Dorsolateral prefrontal cortex (tissue), 120 donors: ENCODE measurements at regions of chr22 and their contacts with region 1.

Region 1: DNA sequence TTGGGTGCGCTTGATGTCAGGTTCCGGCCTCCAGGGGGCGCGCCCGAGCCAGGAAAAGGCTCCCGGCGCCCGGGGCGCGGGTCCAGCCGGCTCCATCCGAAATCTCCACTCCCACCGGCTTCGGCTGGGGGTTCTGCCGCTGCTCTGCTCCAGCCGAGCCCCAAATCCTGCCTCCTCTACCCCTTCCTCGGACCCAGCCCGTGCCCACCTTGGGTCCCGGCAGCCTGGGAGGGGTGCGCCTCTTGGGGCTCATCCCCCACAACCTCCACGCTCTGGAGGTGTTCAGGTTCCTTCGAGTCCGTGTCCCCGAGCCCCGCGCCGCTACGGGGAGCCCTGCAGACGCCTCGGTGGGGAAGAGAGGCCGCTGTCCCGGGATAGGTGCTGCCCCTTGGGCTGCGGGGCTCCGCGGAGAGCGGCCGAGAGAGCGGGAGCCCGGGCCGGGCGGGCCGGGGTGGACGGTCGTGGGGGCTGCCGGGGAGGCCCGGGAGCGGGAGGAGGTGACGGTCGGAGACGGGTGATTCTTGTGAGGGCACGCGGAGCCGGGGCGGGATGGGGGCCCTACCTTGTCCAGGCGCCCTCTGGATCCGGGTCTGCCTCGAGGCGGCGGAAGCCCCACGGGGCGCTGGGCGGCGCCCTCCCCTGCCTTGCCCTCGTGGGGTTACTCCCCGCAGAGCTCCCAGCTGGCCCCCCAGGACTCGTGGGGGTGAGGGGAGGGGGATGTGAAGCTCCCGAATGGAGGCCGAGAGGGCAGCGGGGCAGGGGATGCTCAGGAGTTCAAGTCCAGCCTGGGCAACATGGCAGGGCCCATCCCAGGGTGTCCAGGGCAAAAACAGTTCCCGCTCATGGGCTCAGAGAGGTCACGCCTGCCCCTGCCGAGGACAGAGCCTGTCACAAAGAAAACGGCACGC is 13.2 kb upstream of the CYB5R3 start:
- DNase-seq: peak; percentile 64 to 84 (median 76)
- H3K4me3 ChIP-seq: peak overlapping the region; percentile 34 to 83 (median 66)
- H3K27ac ChIP-seq: peak overlapping the region in 36 of 59 donors; percentile 1 to 86 (median 63)
- H3K27me3 ChIP-seq: no peaks in the 10 kb centered on the region
- CTCF ChIP-seq: peak in 54 of 56 donors; percentile 72 to 90 (median 82)

Region 2: GRCh38 chr22:42614312-42615091 is 47.9 kb before region 1 on chr22 and contains the start of gene POLDIP3:
- intact Hi-C with region 1: no loop called
- DNase-seq: peak; percentile 99 to 100 (median 99)
- H3K4me3 ChIP-seq: peak within 1 kb of the TSS; percentile 74 to 100 (median 91)
- H3K27ac ChIP-seq: peak within 1 kb of the TSS; percentile 88 to 100 (median 98)
- H3K27me3 ChIP-seq: no peaks in the 10 kb centered on the region
- CTCF ChIP-seq: peak in 55 of 56 donors; percentile 31 to 81 (median 59)
- total RNA-seq, gene POLDIP3: 47.0 to 95.5 (median 65.3) TPM

Region 3: GRCh38 chr22:42780070-42780540 is 117.7 kb after region 1 on chr22:
- intact Hi-C with region 1: loop called in 1 of 2 experiments (anchors 10 kb)
- DNase-seq: peak in 3 of 10 donors; percentile 25 to 66 (median 53)
- H3K4me3 ChIP-seq: no peak overlapping the region
- H3K27ac ChIP-seq: peak overlapping the region in 2 of 59 donors; percentile 27 to 56
- H3K27me3 ChIP-seq: no peaks in the 10 kb centered on the region
- CTCF ChIP-seq: peak; percentile 67 to 91 (median 83)

Region 4: DNA sequence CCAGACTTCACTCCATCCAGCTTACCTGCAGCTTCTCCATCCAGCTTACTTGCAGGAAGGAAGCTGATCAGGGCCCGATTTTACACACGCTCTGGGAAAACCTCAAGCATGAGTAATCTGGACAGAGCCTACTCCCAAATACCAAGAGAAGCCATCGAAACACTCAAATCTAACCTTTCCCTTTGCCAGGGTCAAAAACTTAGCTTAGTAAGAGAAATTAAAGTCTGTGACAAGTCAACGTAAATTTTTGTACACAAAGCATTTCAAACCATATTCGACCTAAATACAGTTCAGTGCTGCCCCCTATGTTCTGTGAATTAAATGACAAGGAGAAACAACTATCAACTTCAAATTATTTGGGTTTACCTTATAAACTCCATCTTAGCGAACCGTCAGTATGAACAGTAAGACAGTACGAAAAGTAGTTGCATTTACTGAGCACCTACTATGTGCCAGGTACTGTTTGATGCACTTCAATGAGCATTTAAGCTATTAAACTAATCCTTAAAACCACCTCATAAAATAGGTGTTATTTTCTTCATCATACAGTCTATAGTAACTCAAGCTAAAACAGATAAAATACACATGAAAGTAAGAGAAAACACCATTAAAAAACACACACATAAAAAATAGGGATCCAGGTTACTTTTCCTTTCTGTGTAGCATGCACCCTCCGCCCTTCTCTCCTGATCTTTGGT is 157.8 kb after region 1 on chr22:
- intact Hi-C with region 1: loop called in 1 of 2 experiments (anchors 1 kb)
- DNase-seq: no peak
- H3K4me3 ChIP-seq: no peak overlapping the region
- H3K27ac ChIP-seq: peak overlapping the region in 8 of 59 donors; percentile 0 to 44 (median 9)
- H3K27me3 ChIP-seq: no peaks in the 10 kb centered on the region
- CTCF ChIP-seq: peak in 45 of 56 donors; percentile 8 to 84 (median 60)

Region 5: DNA sequence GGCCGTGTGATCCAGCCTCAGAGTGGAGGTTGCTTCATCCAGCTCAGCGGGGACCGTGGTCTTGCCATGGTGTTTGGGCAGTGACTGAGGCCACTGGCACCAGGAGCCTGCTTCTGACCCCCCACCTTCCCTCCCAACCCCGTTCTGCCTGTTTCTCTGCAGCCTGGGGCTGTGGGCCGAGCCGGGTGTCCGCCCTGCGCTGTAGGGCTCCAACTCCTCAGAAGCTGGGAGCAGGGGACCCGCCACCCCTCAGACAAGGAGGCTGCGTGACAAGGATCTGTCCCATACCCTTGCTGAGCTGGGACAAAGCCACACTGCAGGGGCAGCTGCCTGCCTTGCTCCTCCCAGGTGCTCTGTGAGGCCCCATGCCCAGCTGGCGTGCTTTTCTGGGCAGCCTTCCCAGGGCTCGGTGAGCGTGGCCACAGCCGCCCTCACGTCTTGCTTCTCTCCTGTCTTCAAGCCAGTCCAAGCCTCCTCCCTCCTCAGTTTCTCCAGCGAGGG is 206.4 kb after region 1 on chr22:
- intact Hi-C with region 1: loop called in 1 of 2 experiments (anchors 5 kb)
- DNase-seq: peak in 9 of 10 donors; percentile 42 to 88 (median 71)
- H3K4me3 ChIP-seq: no peak overlapping the region
- H3K27ac ChIP-seq: peak overlapping the region in 17 of 59 donors; percentile 5 to 66 (median 34)
- H3K27me3 ChIP-seq: no peaks in the 10 kb centered on the region
- CTCF ChIP-seq: peak in 1 of 56 donors; percentile 9

Region 6: DNA sequence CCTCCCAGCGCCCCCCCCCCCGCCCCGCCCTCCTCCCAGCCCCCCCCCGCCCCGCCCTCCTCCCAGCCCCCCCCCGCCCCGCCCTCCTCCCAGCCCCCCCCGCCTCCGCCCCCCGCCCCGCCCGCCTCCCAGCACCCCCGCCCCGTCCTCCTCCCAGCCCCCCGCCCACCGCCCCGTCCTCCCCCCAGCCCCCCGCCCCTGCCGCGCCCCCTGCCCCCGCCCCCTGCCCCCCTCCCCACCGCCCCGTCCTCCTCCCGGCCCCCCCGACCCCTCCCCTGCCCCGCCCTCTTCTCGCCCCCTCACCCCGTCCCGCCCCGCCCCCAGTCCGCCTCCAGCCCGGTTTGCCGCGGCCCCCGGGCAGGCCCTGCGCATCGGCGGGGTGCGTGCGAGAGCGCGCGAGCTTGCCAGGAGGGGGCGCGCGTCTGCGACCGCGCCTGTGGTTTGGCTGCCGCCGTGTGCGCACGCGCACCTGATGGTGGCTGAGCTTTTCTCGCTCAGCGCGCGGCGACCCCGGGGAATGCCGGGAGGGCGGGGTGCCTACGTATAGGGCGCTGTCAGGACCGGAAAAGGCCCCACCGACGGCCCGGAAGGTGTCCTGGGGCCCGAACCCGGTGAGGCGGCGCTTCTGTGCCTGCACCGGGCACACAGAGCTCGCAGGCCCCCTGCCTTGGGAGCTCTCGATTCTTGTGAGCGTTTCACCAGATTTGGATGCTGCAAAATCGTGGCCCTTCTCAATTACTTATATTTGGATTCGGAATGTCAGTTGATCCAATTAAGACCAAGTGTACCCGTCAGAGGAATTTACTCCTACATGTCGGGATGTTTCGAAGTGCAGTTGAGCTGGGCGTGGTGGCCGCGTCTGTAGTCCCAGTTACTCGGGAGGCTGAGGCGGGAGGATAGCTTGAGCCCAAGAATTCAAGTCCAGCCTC is 525.1 kb after region 1 on chr22:
- intact Hi-C with region 1: loop called in 1 of 2 experiments (anchors 5 kb)
- DNase-seq: peak; percentile 90 to 96 (median 93)
- H3K4me3 ChIP-seq: peak overlapping the region; percentile 42 to 89 (median 69)
- H3K27ac ChIP-seq: peak overlapping the region; percentile 42 to 96 (median 89)
- H3K27me3 ChIP-seq: no peaks in the 10 kb centered on the region
- CTCF ChIP-seq: peak; percentile 43 to 85 (median 70)